GM12878 (cell line): ENCODE measurements at regions of chr3 and their contacts with region 1.

Region 1: GRCh38 chr3:112405845-112406244 is 72.9 kb downstream of the CD200 start:
- DNase-seq: no peak
- ATAC-seq: peak; percentile 72
- H3K4me3 ChIP-seq: no peak overlapping the region
- H3K27ac ChIP-seq: no peak overlapping the region; the same call in 1 of the 2 replicates
- H3K4me1 ChIP-seq: peaks cover 27% of the 10 kb centered on the region
- H3K27me3 ChIP-seq: no peaks in the 10 kb centered on the region
- CTCF ChIP-seq: no peak
- EP300 ChIP-seq: no peak
- POLR2A ChIP-seq: no peak
- RAD21 ChIP-seq: no peak

Region 2: GRCh38 chr3:112149136-112149535 is 256.7 kb before region 1 on chr3:
- CTCF ChIA-PET with region 1: no interaction called
- POLR2A ChIA-PET with region 1: no interaction called
- RAD21 ChIA-PET with region 1: no interaction called
- SMC1A ChIA-PET with region 1: no interaction called
- in situ Hi-C with region 1: no loop called
- intact Hi-C with region 1: no loop called
- DNase-seq: no peak
- ATAC-seq: no peak
- H3K4me3 ChIP-seq: no peak overlapping the region
- H3K27ac ChIP-seq: no peak overlapping the region
- H3K4me1 ChIP-seq: no peaks in the 10 kb centered on the region
- H3K27me3 ChIP-seq: no peaks in the 10 kb centered on the region
- CTCF ChIP-seq: no peak
- EP300 ChIP-seq: no peak
- POLR2A ChIP-seq: no peak
- RAD21 ChIP-seq: no peak

Region 3: DNA sequence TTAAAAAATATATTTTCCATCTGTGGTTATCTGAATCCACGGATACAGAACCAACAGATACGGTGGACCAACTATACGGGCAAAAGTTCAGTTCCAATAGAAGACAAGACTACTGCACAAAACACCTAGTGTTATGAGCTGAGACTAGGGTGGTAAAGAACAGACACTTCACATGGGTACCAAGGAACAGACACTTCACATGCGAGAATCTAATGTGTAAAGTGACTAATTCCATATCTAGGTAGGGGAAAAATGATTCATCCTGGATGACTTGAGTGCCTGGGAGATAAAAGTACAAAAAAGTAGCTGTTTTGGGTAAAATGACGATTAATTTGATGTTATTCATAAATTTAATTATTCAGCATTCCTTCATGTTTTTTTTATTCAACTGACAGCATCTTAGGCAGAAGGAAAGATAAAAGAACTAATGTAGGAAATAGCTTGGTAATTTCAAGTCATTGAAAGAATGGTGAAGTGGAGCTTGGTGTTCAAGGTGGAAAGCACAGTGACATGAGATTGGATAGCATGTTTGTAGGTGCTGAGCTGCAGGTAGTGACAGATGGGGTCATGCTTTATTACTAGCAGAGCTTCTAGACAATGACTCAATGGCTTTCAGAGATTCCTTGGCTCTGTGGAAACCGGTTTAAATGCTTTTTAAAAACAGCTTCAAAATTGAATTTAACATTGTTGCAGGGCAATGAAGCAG is 67.7 kb before region 1 on chr3:
- CTCF ChIA-PET with region 1: interaction called, 15 read pairs
- POLR2A ChIA-PET with region 1: interaction called, 8 read pairs
- RAD21 ChIA-PET with region 1: interaction called, 57 read pairs
- SMC1A ChIA-PET with region 1: interaction called, 41 read pairs
- in situ Hi-C with region 1: no loop called
- intact Hi-C with region 1: loop called (anchors 2 kb)
- DNase-seq: no peak
- ATAC-seq: peak; percentile 14
- H3K4me3 ChIP-seq: peak overlapping the region; percentile 23; the same call in 1 of the 2 replicates
- H3K27ac ChIP-seq: no peak overlapping the region
- H3K4me1 ChIP-seq: no peaks in the 10 kb centered on the region; the same call in 1 of the 2 replicates
- H3K27me3 ChIP-seq: no peaks in the 10 kb centered on the region
- CTCF ChIP-seq: no peak
- EP300 ChIP-seq: no peak
- POLR2A ChIP-seq: no peak
- RAD21 ChIP-seq: no peak

Region 4: DNA sequence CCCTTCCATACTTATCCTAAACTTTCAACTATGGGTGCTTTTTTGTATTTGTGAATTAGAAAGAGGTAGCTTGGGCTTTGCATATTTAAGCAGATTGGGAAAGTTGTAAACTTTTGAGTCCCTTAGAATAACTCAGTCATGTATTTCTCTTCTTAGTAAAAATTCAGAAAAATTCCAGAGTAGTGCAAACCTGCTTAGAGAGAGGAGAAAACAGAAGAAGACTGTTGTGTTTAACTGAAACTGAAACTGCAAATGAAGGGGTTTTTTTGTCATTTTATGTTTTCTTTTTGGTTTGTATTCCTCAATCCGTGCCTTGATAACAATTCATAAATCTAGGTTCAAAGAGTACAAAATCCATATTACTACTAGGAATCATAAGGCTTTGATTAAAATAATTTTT is 41.6 kb before region 1 on chr3:
- CTCF ChIA-PET with region 1: interaction called, 5 read pairs
- POLR2A ChIA-PET with region 1: interaction called, 3 read pairs
- RAD21 ChIA-PET with region 1: interaction called, 43 read pairs
- SMC1A ChIA-PET with region 1: interaction called, 41 read pairs
- in situ Hi-C with region 1: no loop called
- intact Hi-C with region 1: loop called (anchors 2 kb)
- DNase-seq: no peak
- ATAC-seq: peak; percentile 79
- H3K4me3 ChIP-seq: peak overlapping the region; percentile 26; the same call in 1 of the 2 replicates
- H3K27ac ChIP-seq: peak overlapping the region; percentile 84
- H3K4me1 ChIP-seq: peaks cover 29% of the 10 kb centered on the region
- H3K27me3 ChIP-seq: no peaks in the 10 kb centered on the region
- CTCF ChIP-seq: no peak
- EP300 ChIP-seq: no peak
- POLR2A ChIP-seq: no peak
- RAD21 ChIP-seq: no peak

Region 5: GRCh38 chr3:112456147-112456546 is 50.3 kb after region 1 on chr3:
- CTCF ChIA-PET with region 1: interaction called, 8 read pairs
- POLR2A ChIA-PET with region 1: interaction called, 9 read pairs
- RAD21 ChIA-PET with region 1: interaction called, 33 read pairs
- SMC1A ChIA-PET with region 1: interaction called, 46 read pairs
- in situ Hi-C with region 1: no loop called
- intact Hi-C with region 1: loop called (anchors 1 kb)
- DNase-seq: no peak
- ATAC-seq: peak; percentile 46
- H3K4me3 ChIP-seq: no peak overlapping the region
- H3K27ac ChIP-seq: peak overlapping the region; percentile 61
- H3K4me1 ChIP-seq: peaks cover 17% of the 10 kb centered on the region
- H3K27me3 ChIP-seq: no peaks in the 10 kb centered on the region
- CTCF ChIP-seq: no peak
- EP300 ChIP-seq: peak; percentile 59 to 68; a peak in 1 of 4 replicates
- POLR2A ChIP-seq: no peak
- RAD21 ChIP-seq: peak; percentile 21; the same call in 1 of the 2 replicates

Region 6: GRCh38 chr3:112489674-112490479 is 84.0 kb after region 1 on chr3:
- CTCF ChIA-PET with region 1: interaction called, 3 read pairs
- POLR2A ChIA-PET with region 1: no interaction called
- RAD21 ChIA-PET with region 1: interaction called, 5 read pairs
- SMC1A ChIA-PET with region 1: interaction called, 13 read pairs
- in situ Hi-C with region 1: no loop called
- intact Hi-C with region 1: loop called (anchors 2 kb)
- DNase-seq: peak; percentile 75
- ATAC-seq: peak; percentile 61
- H3K4me3 ChIP-seq: peak overlapping the region; percentile 51
- H3K27ac ChIP-seq: peak overlapping the region; percentile 97
- H3K4me1 ChIP-seq: peaks cover 13% of the 10 kb centered on the region; the same call in 1 of the 2 replicates
- H3K27me3 ChIP-seq: no peaks in the 10 kb centered on the region
- CTCF ChIP-seq: no peak
- EP300 ChIP-seq: peak in 1 of 2 experiments; percentile 27; a peak in 1 of 4 replicates
- POLR2A ChIP-seq: no peak
- RAD21 ChIP-seq: 0 out of 2 replicates have a peak, but pooled peaks have one; percentile 22

Region 7: DNA sequence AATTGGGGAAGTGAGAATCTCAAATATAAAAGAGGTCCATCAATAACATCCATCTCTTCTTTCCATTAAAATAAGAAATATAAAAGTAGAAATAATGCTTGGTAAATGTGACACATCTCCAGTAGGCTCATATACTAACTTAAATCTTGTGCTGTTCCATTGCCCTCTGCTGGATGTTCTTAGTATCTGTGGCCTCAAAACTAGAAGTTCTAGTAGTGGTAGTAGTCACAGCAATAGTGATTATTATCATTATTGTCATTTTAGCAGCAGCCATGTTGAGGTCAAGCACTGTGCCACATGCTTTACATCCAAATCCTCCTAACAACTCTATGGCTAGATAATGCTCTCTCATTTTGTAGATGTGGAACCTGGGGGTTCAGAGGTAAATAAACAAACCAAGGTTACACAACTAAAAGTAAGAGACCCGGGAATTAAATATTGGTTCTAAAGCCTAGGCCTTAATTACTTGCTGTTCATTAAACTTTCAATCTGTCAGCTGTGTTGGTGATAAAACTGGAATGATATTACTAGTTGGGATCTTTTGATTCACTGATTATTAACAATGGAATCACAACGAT is 113.7 kb after region 1 on chr3:
- CTCF ChIA-PET with region 1: interaction called, 3 read pairs
- POLR2A ChIA-PET with region 1: interaction called, 3 read pairs
- RAD21 ChIA-PET with region 1: interaction called, 8 read pairs
- SMC1A ChIA-PET with region 1: interaction called, 6 read pairs
- in situ Hi-C with region 1: no loop called
- intact Hi-C with region 1: loop called (anchors 1 kb)
- DNase-seq: peak; percentile 68
- ATAC-seq: peak; percentile 83
- H3K4me3 ChIP-seq: no peak overlapping the region
- H3K27ac ChIP-seq: peak overlapping the region; percentile 54
- H3K4me1 ChIP-seq: peaks cover 4% of the 10 kb centered on the region; the same call in 1 of the 2 replicates
- H3K27me3 ChIP-seq: no peaks in the 10 kb centered on the region
- CTCF ChIP-seq: peak; percentile 68 to 72 (median 70)
- EP300 ChIP-seq: no peak
- POLR2A ChIP-seq: no peak
- RAD21 ChIP-seq: peak; percentile 92